ENCODE measurements at regions of chr9 and their contacts with region 1.

Region 1: DNA sequence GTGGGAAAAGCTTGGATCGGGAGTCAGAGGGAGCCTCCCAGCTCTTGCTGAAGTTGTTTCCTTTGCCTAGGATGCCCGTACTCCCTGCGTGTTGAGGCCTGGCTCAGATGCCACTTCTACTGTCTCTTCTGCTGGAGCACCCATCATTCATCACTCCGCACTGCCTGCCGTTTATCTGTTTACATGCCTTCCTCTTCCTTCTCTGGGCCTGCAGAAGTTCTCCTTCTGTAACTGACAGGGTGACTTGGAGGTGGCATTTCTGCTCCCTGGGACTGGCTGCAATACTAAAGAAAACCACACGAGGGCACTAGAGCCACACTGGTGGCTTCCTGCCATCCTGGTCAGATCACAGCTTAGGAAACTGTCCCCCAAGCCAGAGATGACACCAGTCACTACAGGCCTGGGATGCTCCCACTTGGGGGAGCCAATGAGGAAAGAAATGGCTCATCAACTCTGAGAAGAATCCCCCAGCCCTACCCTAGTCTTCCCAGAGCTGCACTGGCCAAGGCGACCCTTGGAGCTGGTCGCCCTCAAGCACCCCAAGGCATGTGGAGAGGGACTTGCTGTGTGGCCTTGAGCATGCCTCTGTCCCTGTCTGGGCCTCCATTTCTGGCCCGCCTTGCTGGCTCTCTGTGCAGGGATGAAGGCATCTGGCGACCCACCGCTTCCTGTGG is 9.7 kb upstream of the SLC25A51 start:
- DNase-seq: peak; percentile 78
- ATAC-seq: peak; percentile 87

Region 2: GRCh38 chr9:37976714-37977477 is 63.3 kb after region 1 on chr9:
- intact Hi-C with region 1: loop called (anchors 10 kb)
- DNase-seq: no peak
- ATAC-seq: peak; percentile 32